HCT116 (cell line): ENCODE measurements at regions of chr13 and their contacts with region 1.

Region 1: DNA sequence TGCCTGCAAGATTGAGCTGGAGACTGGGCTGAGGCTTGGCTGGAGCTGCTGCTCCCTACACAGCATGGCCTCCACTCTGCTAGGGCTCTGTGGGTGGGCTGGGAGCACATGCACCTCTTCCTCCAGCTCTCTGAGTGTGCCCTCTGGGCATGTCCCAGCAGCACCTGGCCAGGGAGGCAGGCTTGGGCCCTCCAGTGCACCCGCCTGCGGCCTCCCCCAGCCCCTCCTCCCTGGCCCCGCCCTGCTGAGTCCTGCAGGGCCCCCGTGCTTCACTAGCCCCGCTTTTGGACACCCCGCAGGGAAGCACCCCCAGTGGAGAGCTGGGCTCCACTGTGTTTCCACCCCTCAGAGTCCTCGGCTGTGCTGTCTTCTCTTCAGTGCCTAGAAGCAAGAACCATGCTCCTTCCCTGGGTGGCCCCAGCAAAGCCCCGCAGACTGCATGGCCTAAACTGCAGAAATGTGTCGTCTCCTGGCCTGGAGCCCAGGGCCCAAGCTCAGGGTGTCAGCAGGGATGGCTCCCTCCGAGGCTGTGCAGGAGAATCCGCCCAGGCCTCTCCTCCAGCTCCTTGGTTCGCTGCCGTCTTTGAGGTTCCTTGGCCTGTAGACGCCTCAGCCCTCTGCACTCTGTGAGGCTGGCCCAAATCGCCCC is 5.0 kb upstream of the TEX29 start:
- DNase-seq: no peak
- ATAC-seq: 0 out of 2 replicates have a peak, but pooled peaks have one; percentile 17
- H3K4me3 ChIP-seq: no peak overlapping the region
- H3K27ac ChIP-seq: no peak overlapping the region
- H3K4me1 ChIP-seq: no peaks in the 10 kb centered on the region
- H3K27me3 ChIP-seq: no peaks in the 10 kb centered on the region
- CTCF ChIP-seq: no peak
- POLR2A ChIP-seq: no peak
- RAD21 ChIP-seq: no peak

Region 2: DNA sequence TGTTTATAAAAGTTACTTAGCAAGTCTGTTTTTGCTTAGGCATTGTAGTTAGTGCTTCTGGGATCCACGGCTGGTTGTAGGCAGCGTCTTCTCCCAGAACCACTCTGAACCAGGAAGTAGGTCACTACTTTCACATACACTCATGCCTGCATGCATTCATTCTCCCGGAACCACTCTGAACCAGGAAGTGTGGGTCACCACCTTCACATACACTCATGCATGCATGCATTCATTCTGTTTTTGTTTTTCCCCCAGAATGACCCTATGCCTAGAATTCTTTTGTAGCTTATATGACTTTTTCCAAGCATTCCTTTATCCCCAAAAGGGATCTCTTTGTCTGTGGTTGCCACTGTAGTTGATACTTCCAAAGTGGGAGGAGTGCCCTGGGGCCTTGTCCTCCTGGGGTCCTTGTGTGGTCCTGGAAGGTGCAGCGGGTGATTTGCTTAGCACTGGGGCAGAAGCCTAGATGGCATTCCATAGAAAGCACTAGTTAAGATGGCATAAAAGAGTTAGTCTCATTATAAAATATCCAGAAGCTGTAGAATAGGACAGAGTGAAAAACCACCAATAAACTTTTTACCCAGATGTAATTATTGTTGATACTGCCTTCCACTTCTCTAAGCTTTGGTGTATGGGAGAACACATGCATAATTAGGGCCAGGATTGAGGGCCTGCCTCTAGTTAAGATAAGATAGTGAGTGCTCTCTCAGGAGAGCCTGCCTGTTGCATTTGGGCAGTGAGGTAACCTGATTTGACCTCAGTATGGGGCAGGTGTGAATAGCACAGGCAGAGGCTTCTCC is 63.6 kb before region 1 on chr13:
- CTCF ChIA-PET with region 1: no interaction called
- POLR2A ChIA-PET with region 1: no interaction called
- RAD21 ChIA-PET with region 1: no interaction called
- intact Hi-C with region 1: loop called (anchors 10 kb)
- DNase-seq: no peak
- ATAC-seq: no peak
- H3K4me3 ChIP-seq: no peak overlapping the region
- H3K27ac ChIP-seq: no peak overlapping the region
- H3K4me1 ChIP-seq: no peaks in the 10 kb centered on the region
- H3K27me3 ChIP-seq: no peaks in the 10 kb centered on the region
- CTCF ChIP-seq: no peak
- POLR2A ChIP-seq: no peak
- RAD21 ChIP-seq: no peak

Region 3: GRCh38 chr13:112940236-112940635 is 1624.8 kb after region 1 on chr13:
- CTCF ChIA-PET with region 1: no interaction called
- POLR2A ChIA-PET with region 1: no interaction called
- RAD21 ChIA-PET with region 1: no interaction called
- intact Hi-C with region 1: no loop called
- DNase-seq: no peak
- ATAC-seq: no peak
- H3K4me3 ChIP-seq: no peak overlapping the region
- H3K27ac ChIP-seq: no peak overlapping the region
- H3K4me1 ChIP-seq: peaks cover 4 to 16% of the 10 kb centered on the region in 2 experiments; a peak in 3 of 4 replicates
- H3K27me3 ChIP-seq: no peaks in the 10 kb centered on the region
- CTCF ChIP-seq: no peak
- POLR2A ChIP-seq: no peak
- RAD21 ChIP-seq: no peak